Activated T-helper 1 cell treated with anti-CD3 and anti-CD28 coated beads, Interleukin-12 subunit alpha, Interleukin-12 subunit beta, Interleukin-2, Interleukin-4 antibody, amounts not matched to agents 30 ng/mL and 10 ng/mL and 1 ng/mL, durations not matched to agents 14 hours and 24 hours and 36 hours (primary cell): ENCODE measurements at regions of chr19 and their contacts with region 1.

Region 1: DNA sequence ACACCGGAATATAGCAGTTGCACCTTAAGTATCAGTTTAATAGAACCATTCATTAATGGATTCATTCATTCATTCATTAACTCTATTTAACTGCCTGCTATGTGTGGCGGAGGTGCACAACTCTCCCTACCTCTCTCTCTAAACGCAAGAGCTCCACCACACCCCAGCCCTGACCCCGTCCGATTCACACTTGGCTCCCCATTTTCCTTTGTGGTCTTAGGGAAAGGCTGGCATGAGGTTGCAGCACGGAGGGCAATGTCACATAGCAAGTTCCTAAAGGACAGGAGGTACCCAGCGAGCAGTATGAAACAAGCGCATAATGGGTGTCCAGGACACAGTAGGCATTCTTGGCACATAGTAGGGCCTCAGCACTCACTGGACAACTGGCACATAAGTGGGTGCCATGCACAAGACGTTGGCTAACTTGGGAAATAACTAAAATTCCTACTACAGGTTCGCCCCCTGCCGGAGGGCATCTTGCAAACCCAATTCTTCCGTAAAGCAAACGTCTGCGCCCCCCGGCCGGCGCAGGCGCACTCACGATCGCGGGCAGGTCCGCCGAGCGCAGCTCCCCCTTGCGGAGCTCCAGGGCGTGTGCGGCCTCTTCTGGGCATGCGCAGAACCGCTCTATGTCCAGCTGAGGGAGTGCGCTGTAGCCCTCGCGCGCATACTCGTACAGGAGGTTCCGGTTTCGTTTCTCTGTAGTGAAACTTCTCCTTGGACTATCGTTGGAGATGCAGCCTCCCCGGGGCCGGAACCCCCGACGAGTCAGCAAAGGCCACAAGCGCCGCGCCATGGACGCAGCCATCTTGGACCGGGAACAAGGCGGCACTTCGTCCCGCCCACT is at the start of gene SARS2:
- DNase-seq: peak; percentile 91
- H3K4me3 Mint-ChIP-seq: peak within 1 kb of the TSS; percentile 99
- H3K27ac Mint-ChIP-seq: peak within 1 kb of the TSS; percentile 97
- H3K4me1 Mint-ChIP-seq: peaks cover 28% of the 10 kb centered on the region
- H3K27me3 Mint-ChIP-seq: no peaks in the 10 kb centered on the region
- total RNA-seq, gene SARS2: 36.5 and 38.4 TPM in 2 replicates

Region 2: DNA sequence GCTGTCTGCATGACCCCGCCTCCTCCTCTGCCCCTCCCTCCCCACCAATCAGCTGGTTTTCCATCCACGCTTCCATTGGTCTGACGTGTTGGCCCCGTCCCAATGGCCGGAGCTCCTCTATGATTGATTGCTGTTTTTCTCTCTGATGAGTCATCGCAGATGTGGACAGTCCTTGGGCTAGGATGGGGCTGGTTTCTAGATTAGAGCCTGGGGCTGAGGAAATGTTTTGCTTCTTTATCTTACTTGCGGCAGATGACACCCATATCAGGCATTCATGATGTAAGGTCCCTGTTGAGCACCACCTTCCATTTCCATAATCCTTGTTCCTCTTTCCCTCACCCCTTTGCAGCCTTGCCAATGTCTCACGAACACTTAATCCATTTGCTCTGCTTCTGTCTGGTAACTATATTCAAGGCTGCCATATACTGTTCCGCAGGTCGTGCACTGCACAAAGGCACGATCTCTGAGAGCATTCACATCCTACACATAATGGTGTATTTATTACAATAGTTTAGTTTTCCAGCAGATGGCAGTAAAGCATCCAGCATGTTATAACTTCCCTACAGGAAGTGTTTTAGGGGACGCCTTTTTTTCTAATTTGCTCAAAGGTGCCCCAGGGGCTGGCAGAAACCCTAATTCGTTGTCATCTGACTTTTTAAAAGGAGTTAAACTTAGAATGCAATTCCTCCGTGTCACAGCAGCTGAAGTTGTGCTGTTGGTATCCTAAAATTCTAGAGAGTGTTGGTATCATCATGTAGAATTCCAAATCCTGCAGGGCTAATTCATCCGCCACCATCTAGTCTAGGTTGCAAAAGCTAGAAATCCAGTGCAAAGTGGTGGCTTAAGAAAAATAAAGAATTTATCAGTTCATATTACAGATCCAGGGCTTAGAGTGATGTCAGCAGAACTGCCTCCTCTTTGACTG is 385.9 kb before region 1 on chr19:
- intact Hi-C with region 1: loop called (anchors 2 kb)
- DNase-seq: no peak
- H3K4me3 Mint-ChIP-seq: peak overlapping the region; percentile 63
- H3K27ac Mint-ChIP-seq: peak overlapping the region; percentile 46
- H3K4me1 Mint-ChIP-seq: peaks cover 29% of the 10 kb centered on the region
- H3K27me3 Mint-ChIP-seq: no peaks in the 10 kb centered on the region

Region 3: DNA sequence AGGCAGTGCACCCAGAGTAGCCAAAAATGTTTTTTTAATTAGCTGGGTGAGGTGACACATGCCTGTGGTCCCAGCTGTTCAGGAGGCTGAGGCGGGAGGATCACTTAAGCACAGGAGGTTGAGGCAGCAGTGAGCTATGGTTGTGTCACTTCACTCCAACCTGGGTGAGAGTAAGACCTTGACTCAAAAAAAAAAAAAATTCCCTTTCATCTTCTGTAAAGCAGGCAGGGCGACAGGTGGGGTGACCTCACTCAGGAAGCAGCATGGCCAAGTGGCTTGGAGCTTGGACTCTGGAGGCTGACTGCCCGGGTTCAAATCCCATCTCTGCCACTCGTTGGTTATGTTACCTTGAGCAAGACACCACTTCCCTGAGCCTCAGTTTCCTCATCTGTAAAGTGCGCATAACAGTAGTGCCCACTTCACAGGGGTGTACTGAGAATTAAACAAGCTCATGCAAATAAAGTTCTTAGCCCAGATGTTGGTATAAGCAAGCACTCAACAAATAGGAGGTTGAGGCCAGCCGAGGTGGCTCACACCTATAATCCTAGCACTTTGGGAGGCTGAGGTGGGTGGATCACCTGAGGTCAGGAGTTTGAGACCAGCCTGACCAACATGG is 360.7 kb before region 1 on chr19:
- intact Hi-C with region 1: no loop called
- DNase-seq: no peak
- H3K4me3 Mint-ChIP-seq: no peak overlapping the region
- H3K27ac Mint-ChIP-seq: no peak overlapping the region
- H3K4me1 Mint-ChIP-seq: peaks cover 4% of the 10 kb centered on the region
- H3K27me3 Mint-ChIP-seq: peaks cover 18% of the 10 kb centered on the region

Region 4: DNA sequence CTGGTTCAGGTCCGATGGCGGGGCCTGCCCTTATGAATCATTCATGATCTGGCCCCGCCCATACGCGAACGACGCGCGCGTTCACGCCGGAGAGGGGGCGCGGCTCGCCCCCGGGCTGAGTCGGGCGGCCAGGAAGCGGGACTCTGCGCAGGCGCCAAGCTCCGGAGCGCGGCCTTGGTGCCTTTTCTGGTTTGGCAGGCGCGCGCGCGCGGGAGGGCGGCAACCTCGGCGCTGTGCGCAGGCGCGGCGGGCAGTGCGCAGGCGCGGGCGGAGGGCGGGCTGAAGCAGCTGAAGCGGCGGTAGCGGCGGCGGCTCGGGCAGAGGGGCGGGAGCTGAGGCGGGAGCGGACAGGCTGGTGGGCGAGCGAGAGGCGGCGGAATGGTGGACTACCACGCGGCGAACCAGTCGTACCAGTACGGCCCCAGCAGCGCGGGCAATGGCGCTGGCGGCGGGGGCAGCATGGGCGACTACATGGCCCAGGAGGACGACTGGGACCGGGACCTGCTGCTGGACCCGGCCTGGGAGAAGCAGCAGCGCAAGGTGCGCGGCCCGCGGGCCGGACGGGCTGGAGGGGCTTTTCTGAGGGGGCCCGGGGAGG is 282.7 kb before region 1 on chr19 and contains the start of gene ACTN4:
- intact Hi-C with region 1: loop called (anchors 1 kb)
- DNase-seq: peak; percentile 100
- H3K4me3 Mint-ChIP-seq: peak within 1 kb of the TSS; percentile 94
- H3K27ac Mint-ChIP-seq: peak within 1 kb of the TSS; percentile 82
- H3K4me1 Mint-ChIP-seq: peaks cover 38% of the 10 kb centered on the region
- H3K27me3 Mint-ChIP-seq: no peaks in the 10 kb centered on the region
- total RNA-seq, gene ACTN4: 281 and 287 TPM in 2 replicates

Region 5: GRCh38 chr19:38727868-38728660 is 202.1 kb before region 1 on chr19:
- intact Hi-C with region 1: no loop called
- DNase-seq: no peak
- H3K4me3 Mint-ChIP-seq: peak overlapping the region; percentile 26
- H3K27ac Mint-ChIP-seq: no peak overlapping the region
- H3K4me1 Mint-ChIP-seq: peaks cover 23% of the 10 kb centered on the region
- H3K27me3 Mint-ChIP-seq: no peaks in the 10 kb centered on the region

Region 6: DNA sequence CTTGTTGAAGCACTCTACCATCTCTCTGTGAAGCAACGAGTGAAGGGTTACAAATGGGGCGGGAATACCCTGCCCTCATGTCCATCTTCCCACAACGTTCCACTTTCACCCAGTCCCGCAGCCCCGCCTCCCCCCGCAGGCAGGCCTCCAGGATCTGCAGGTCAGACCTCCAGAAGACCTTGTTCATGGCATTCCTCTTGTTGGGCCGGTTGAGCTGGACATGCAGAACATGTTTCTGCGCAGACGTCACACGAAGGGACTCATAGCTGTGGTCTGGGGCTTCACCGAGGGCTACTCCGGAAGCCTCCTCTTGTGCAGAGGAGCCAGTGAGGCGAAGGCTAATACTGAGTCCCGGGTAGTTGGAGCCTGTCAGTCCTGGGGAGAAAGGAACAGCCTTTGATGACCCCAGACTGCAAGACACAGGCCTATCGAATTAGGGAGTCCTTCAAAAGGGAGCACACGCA is 99.0 kb before region 1 on chr19:
- intact Hi-C with region 1: loop called (anchors 1 kb)
- DNase-seq: no peak
- H3K4me3 Mint-ChIP-seq: peak overlapping the region; percentile 89
- H3K27ac Mint-ChIP-seq: peak overlapping the region; percentile 95
- H3K4me1 Mint-ChIP-seq: peaks cover 22% of the 10 kb centered on the region
- H3K27me3 Mint-ChIP-seq: no peaks in the 10 kb centered on the region

Region 7: DNA sequence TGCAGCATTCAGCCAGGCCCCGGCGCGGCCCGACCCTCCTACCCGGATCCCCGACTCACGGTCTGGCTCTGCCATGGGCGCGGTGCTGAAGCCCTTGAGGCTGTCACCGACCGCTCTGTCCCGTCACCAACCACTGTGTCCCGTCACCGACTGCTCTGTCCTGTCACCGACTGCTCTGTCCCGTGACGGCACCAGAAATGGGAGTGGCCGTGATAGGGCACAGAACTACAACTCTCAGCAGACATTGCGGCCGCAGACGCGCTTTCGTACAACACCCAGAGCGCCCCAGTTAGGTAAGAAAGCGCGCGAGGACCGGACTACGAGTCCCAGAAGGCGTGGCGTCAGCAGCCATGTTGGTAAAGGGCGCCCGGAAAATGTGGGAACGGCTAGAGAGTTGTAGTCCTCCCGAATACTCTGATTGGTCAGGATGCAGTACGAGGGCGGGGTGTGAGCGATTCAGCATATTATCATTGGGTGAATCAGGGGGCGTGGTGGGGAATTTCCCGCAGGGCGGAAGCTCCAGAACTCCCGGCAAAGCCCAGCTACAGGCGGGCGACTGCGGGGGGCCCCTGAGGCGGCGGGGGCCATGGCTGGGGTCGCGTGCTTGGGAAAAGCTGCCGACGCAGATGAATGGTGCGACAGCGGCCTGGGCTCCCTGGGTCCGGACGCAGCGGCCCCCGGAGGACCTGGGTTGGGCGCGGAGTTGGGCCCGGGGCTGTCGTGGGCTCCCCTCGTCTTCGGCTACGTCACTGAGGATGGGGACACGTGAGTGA is 30.5 kb before region 1 on chr19 and contains the starts of genes NFKBIB and SIRT2:
- intact Hi-C with region 1: loop called (anchors 1 kb)
- DNase-seq: peak; percentile 100
- H3K4me3 Mint-ChIP-seq: peak within 1 kb of the TSS; percentile 93
- H3K27ac Mint-ChIP-seq: peak within 1 kb of the TSS; percentile 94
- H3K4me1 Mint-ChIP-seq: peaks cover 42% of the 10 kb centered on the region
- H3K27me3 Mint-ChIP-seq: no peaks in the 10 kb centered on the region
- total RNA-seq, gene NFKBIB: 98.1 and 102 TPM in 2 replicates
- total RNA-seq, gene SIRT2: 28.3 and 28.7 TPM in 2 replicates

Region 8: GRCh38 chr19:39160334-39160791 is 230.2 kb after region 1 on chr19:
- intact Hi-C with region 1: no loop called
- DNase-seq: no peak
- H3K4me3 Mint-ChIP-seq: no peak overlapping the region
- H3K27ac Mint-ChIP-seq: no peak overlapping the region
- H3K4me1 Mint-ChIP-seq: peaks cover 5% of the 10 kb centered on the region
- H3K27me3 Mint-ChIP-seq: no peaks in the 10 kb centered on the region

Region 9: DNA sequence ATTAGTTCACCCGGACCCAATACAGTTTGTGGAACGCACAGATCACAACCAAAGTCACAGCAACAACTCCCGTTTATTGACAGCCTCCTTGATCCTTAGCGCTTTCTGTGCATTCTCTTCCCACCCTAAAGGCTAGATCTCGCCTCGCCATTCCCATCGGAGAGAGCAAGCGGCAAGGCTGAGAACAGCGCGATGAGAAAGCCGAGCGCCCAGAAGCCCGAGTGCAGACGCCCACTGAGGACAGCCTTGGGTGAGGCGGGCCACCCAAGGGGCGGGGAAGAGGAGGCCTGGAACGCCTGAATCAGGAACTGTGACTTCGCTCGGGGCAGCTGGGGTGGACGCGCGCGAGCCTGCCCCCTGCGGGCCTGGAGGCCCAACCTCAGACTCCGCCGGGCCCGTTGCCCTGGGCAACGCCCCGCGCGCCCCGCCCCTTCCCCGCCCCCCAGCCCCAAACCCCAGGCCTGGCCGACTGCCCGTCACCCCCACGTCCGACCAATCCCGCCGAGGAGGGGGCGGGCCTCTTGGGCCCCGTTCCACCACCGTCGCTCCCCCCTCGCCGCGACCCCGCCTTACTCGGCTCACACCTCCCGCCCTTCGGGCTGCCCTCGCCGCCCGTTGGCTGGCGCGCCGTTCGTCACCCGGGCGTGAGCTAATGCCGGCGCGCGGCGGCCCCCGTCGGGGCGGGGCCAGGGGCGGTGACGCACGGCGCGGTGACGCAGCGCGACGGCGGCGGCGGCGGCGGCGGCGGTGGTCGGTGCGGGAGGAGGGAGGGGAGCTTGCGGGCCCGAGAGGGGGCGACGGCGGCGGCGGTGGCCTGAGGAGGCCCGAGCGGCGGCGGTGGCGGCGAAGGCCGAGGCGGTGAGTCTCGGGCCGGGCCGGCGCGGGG is 411.8 kb after region 1 on chr19 and contains the start of gene SAMD4B:
- intact Hi-C with region 1: no loop called
- DNase-seq: peak; percentile 99
- H3K4me3 Mint-ChIP-seq: peak within 1 kb of the TSS; percentile 99
- H3K27ac Mint-ChIP-seq: peak within 1 kb of the TSS; percentile 96
- H3K4me1 Mint-ChIP-seq: peaks cover 73% of the 10 kb centered on the region
- H3K27me3 Mint-ChIP-seq: no peaks in the 10 kb centered on the region
- total RNA-seq, gene SAMD4B: 71.3 and 71.8 TPM in 2 replicates